B cell (primary cell): ENCODE measurements at regions of chr16 and their contacts with region 1.

Region 1: GRCh38 chr16:30445408-30446202 is at the start of gene SEPHS2:
- DNase-seq: peak; percentile 96
- ATAC-seq: peak; percentile 96
- H3K4me3 ChIP-seq: peak within 1 kb of the TSS; percentile 74 to 99 (median 78)
- H3K4me3 Mint-ChIP-seq: peak within 1 kb of the TSS; percentile 96
- H3K27ac ChIP-seq: peak within 1 kb of the TSS; percentile 78 to 85
- H3K27ac Mint-ChIP-seq: peak within 1 kb of the TSS; percentile 97
- H3K4me1 ChIP-seq: peaks cover 29 to 36% of the 10 kb centered on the region in 2 donors
- H3K4me1 Mint-ChIP-seq: peaks cover 42% of the 10 kb centered on the region
- H3K27me3 ChIP-seq: no peaks in the 10 kb centered on the region
- H3K27me3 Mint-ChIP-seq: no peaks in the 10 kb centered on the region
- CTCF ChIP-seq: peak; percentile 47
- total RNA-seq, gene SEPHS2: 62.2 and 63.2 TPM in 2 replicates

Region 2: DNA sequence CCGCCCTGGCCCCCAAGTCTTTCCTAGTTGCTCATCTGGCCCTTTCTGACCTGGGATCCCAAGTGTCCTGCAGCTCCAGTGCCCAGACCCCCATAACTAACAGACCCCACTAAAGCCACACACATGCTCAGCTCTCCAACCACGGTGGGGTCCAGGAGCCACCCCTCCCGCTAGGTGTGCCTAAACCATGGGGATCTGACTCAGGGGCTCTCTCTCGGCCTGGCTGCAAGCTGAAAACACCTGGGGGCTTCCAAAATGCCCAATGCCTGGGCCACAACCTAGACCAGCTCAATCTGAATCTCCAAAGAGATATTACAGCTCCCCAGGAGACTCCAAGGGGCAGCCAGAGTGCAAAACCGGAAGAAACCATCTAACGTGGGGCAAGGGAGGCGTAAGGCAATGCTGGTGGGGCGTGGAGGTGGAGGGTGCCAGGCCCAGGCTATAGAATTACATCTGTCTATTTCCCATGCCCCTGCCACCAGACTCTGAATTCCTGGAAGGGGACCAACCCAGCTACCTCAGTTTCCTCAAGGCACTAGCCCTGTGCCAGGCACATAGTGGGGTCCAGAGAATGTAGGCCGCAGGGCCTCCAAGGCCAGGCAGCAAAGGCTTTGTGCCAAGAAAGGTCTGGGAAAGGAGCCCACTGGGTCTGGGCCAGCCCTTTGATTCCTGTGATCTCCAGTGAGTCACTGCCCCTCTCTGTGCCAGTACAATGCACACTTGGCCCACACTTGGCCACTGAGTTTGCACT is 93.8 kb before region 1 on chr16:
- CTCF ChIA-PET with region 1: no interaction called
- POLR2A ChIA-PET with region 1: no interaction called
- intact Hi-C with region 1: no loop called
- DNase-seq: peak; percentile 8
- ATAC-seq: no peak
- H3K4me3 ChIP-seq: no peak overlapping the region
- H3K4me3 Mint-ChIP-seq: peak overlapping the region; percentile 53
- H3K27ac ChIP-seq: no peak overlapping the region
- H3K27ac Mint-ChIP-seq: no peak overlapping the region
- H3K4me1 ChIP-seq: peaks cover 36 to 59% of the 10 kb centered on the region in 2 donors
- H3K4me1 Mint-ChIP-seq: peaks cover 58% of the 10 kb centered on the region
- H3K27me3 ChIP-seq: no peaks in the 10 kb centered on the region
- H3K27me3 Mint-ChIP-seq: no peaks in the 10 kb centered on the region
- CTCF ChIP-seq: no peak

Region 3: DNA sequence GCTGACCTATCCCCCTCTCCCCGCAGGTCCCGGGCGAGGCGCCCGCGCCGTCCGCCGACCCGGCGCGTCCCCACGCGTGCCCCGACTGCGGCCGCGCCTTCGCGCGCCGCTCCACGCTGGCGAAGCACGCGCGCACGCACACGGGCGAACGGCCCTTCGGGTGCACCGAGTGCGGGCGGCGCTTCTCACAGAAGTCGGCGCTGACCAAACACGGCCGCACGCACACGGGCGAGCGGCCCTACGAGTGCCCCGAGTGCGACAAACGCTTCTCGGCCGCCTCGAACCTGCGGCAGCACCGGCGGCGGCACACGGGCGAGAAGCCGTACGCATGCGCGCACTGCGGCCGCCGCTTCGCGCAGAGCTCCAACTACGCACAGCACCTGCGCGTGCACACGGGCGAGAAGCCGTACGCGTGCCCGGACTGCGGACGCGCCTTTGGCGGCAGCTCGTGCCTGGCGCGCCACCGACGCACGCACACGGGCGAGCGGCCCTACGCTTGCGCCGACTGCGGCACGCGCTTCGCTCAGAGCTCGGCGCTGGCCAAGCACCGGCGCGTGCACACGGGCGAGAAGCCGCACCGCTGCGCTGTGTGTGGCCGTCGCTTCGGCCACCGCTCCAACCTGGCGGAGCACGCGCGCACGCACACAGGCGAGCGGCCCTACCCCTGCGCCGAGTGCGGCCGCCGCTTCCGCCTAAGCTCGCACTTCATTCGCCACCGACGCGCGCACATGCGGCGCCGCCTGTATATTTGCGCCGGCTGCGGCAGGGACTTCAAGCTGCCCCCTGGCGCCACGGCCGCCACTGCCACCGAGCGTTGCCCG is 27.9 kb before region 1 on chr16:
- CTCF ChIA-PET with region 1: interaction called, 4 read pairs
- POLR2A ChIA-PET with region 1: interaction called, 3 read pairs
- intact Hi-C with region 1: loop called (anchors 1 kb)
- DNase-seq: peak; percentile 95
- ATAC-seq: peak; percentile 87
- H3K4me3 ChIP-seq: peak overlapping the region; percentile 33 to 75 (median 66)
- H3K4me3 Mint-ChIP-seq: peak overlapping the region; percentile 77
- H3K27ac ChIP-seq: peak overlapping the region; percentile 47 to 73
- H3K27ac Mint-ChIP-seq: peak overlapping the region; percentile 72
- H3K4me1 ChIP-seq: peaks cover 5 to 12% of the 10 kb centered on the region in 2 donors
- H3K4me1 Mint-ChIP-seq: peaks cover 7% of the 10 kb centered on the region
- H3K27me3 ChIP-seq: no peaks in the 10 kb centered on the region
- H3K27me3 Mint-ChIP-seq: no peaks in the 10 kb centered on the region
- CTCF ChIP-seq: peak; percentile 17

Region 4: GRCh38 chr16:30458561-30459394 is 13.2 kb after region 1 on chr16:
- CTCF ChIA-PET with region 1: interaction called, 57 read pairs
- POLR2A ChIA-PET with region 1: interaction called, 4 read pairs
- intact Hi-C with region 1: loop called (anchors 2 kb)
- DNase-seq: peak; percentile 83
- ATAC-seq: peak; percentile 93
- H3K4me3 ChIP-seq: peak overlapping the region in 3 of 5 experiments; percentile 3 to 17 (median 9)
- H3K4me3 Mint-ChIP-seq: peak overlapping the region; percentile 80
- H3K27ac ChIP-seq: peak overlapping the region; percentile 69 to 70
- H3K27ac Mint-ChIP-seq: peak overlapping the region; percentile 97
- H3K4me1 ChIP-seq: peaks cover 13 to 37% of the 10 kb centered on the region in 2 donors
- H3K4me1 Mint-ChIP-seq: peaks cover 52% of the 10 kb centered on the region
- H3K27me3 ChIP-seq: no peaks in the 10 kb centered on the region
- H3K27me3 Mint-ChIP-seq: no peaks in the 10 kb centered on the region
- CTCF ChIP-seq: no peak

Region 5: DNA sequence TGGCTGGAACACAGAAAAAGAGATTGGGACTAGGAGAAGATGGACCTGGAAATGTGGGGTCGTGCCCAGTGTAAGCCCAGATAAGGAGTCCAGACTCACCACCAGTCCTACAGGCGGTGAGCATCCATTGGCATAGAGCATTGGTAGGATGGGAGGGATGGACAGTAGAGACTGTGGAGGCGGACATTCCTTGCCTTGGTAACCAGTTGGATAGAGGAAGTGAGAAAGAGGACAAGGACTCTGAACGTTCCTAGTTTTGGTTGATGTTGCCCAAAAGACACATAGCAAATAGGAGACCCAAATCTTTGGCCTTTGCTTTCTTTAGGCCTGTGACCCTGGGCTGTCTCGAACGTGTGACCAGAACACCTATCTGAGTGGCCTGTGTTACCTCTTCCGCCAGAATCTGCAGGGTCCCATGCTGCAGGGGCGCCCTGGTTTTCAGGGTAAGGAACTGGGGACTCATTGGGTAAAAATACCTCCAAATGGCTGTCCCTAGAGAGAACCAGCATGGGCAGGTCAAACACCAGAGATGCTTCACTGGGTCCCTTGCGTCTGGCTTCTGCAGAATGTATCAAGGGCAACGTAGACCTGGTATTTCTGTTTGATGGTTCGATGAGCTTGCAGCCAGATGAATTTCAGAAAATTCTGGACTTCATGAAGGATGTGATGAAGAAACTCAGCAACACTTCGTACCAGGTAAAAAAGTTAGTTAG is 33.3 kb after region 1 on chr16:
- CTCF ChIA-PET with region 1: interaction called, 77 read pairs
- POLR2A ChIA-PET with region 1: interaction called, 14 read pairs
- intact Hi-C with region 1: no loop called
- DNase-seq: no peak
- ATAC-seq: peak; percentile 47
- H3K4me3 ChIP-seq: no peak overlapping the region
- H3K4me3 Mint-ChIP-seq: no peak overlapping the region
- H3K27ac ChIP-seq: peak overlapping the region in 1 of 2 donors; percentile 25
- H3K27ac Mint-ChIP-seq: peak overlapping the region; percentile 59
- H3K4me1 ChIP-seq: peaks cover 11 to 16% of the 10 kb centered on the region in 2 donors
- H3K4me1 Mint-ChIP-seq: peaks cover 35% of the 10 kb centered on the region
- H3K27me3 ChIP-seq: no peaks in the 10 kb centered on the region
- H3K27me3 Mint-ChIP-seq: no peaks in the 10 kb centered on the region
- CTCF ChIP-seq: no peak

Region 6: GRCh38 chr16:30534368-30535105 is 88.9 kb after region 1 on chr16 and contains the start of gene ZNF747:
- CTCF ChIA-PET with region 1: interaction called, 35 read pairs
- POLR2A ChIA-PET with region 1: no interaction called
- intact Hi-C with region 1: no loop called
- DNase-seq: peak; percentile 93
- ATAC-seq: peak; percentile 82
- H3K4me3 ChIP-seq: peak within 1 kb of the TSS; percentile 80 to 93 (median 88)
- H3K4me3 Mint-ChIP-seq: peak within 1 kb of the TSS; percentile 98
- H3K27ac ChIP-seq: peak within 1 kb of the TSS; percentile 89 to 94
- H3K27ac Mint-ChIP-seq: peak within 1 kb of the TSS; percentile 94
- H3K4me1 ChIP-seq: peaks cover 8 to 23% of the 10 kb centered on the region in 2 donors
- H3K4me1 Mint-ChIP-seq: peaks cover 33% of the 10 kb centered on the region
- H3K27me3 ChIP-seq: no peaks in the 10 kb centered on the region
- H3K27me3 Mint-ChIP-seq: no peaks in the 10 kb centered on the region
- CTCF ChIP-seq: no peak
- total RNA-seq, gene ZNF747: 17.3 and 27.1 TPM in 2 replicates

Region 7: GRCh38 chr16:31016018-31016417 is 570.4 kb after region 1 on chr16:
- CTCF ChIA-PET with region 1: no interaction called
- POLR2A ChIA-PET with region 1: no interaction called
- intact Hi-C with region 1: no loop called
- DNase-seq: no peak
- ATAC-seq: no peak
- H3K4me3 ChIP-seq: no peak overlapping the region
- H3K4me3 Mint-ChIP-seq: no peak overlapping the region
- H3K27ac ChIP-seq: no peak overlapping the region
- H3K27ac Mint-ChIP-seq: no peak overlapping the region
- H3K4me1 ChIP-seq: peaks cover 3 to 6% of the 10 kb centered on the region in 2 donors
- H3K4me1 Mint-ChIP-seq: peaks cover 17% of the 10 kb centered on the region
- H3K27me3 ChIP-seq: peaks cover 0 to 18% (median 9%) of the 10 kb centered on the region in 4 experiments
- H3K27me3 Mint-ChIP-seq: peaks cover 25% of the 10 kb centered on the region
- CTCF ChIP-seq: no peak